ENCODE measurements at regions of chr9 and their contacts with region 1.

Region 1: DNA sequence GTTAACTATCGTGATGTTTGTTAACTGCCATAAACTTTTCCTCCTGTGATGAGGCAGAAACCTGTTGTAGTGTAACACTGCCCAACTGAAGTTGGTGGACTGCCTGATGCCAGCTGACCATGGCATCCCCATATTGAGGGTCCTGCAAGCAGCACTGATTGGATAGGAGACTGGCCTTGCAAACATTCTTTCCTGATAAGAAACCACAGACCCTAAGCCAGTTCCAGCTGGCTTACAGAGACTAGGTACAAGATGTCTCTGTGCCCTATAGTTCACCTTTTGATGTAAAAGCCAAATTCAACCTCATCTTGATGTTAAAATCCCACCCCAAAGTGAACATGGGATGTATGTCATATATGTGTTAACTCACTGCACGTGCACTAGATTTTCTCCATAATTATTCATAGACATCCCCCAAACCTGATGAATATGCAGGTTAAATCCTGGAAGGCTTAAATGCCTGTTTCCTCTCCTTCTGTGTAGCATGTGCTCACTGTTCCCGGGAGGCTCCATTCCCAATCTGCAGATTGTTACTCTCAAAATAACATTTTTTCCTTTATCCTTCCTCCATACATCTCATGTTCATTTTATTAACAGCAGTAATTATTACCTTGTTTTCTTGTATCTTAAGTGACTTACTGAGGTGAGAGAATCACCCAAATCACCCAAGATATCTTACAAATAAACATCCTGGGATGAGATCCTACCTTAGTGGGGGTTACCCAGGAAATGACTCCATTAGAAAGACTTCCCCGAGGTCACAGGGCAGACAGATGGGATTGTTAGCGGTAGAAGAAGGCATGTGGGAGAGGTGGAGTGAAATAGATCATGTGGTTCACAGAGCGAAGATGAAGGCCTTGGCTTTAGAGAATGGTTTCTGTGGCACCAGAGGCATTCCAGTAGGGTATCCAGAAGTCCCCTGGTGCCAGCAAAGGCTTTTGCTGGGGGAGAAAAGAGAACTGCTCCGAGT is 566.7 kb downstream of the CCDC171 start:
- DNase-seq: no peak
- H3K4me3 ChIP-seq: no peak overlapping the region
- H3K27ac ChIP-seq: no peak overlapping the region
- H3K4me1 ChIP-seq: no peaks in the 10 kb centered on the region
- H3K27me3 ChIP-seq: no peaks in the 10 kb centered on the region
- CTCF ChIP-seq: no peak
- POLR2A ChIP-seq: no peak

Region 2: GRCh38 chr9:15509931-15510788 is 609.4 kb before region 1 on chr9:
- intact Hi-C with region 1: loop called (anchors 10 kb)
- DNase-seq: no peak
- H3K4me3 ChIP-seq: peak overlapping the region; percentile 83 to 99 (median 98)
- H3K27ac ChIP-seq: peak overlapping the region; percentile 84 to 94
- H3K4me1 ChIP-seq: no peaks in the 10 kb centered on the region
- H3K27me3 ChIP-seq: no peaks in the 10 kb centered on the region
- CTCF ChIP-seq: no peak
- POLR2A ChIP-seq: no peak

Region 3: GRCh38 chr9:16138561-16139491 is 19.3 kb after region 1 on chr9:
- intact Hi-C with region 1: no loop called
- DNase-seq: peak in 1 of 2 donors; percentile 29
- H3K4me3 ChIP-seq: no peak overlapping the region
- H3K27ac ChIP-seq: peak overlapping the region in 1 of 2 donors; percentile 69
- H3K4me1 ChIP-seq: no peaks in the 10 kb centered on the region
- H3K27me3 ChIP-seq: no peaks in the 10 kb centered on the region
- CTCF ChIP-seq: no peak
- POLR2A ChIP-seq: no peak